Naive thymus-derived CD4-positive, alpha-beta T cell (primary cell): ENCODE measurements at regions of chr20 and their contacts with region 1.

Region 1: GRCh38 chr20:63381807-63382322 is 20.7 kb upstream of the CHRNA4 start:
- DNase-seq: peak in 7 of 9 donors; percentile 30 to 55 (median 39)
- ATAC-seq: peak; percentile 54
- H3K4me3 ChIP-seq: no peak overlapping the region
- H3K4me3 Mint-ChIP-seq: no peak overlapping the region
- H3K27ac ChIP-seq: no peak overlapping the region
- H3K27ac Mint-ChIP-seq: no peak overlapping the region
- H3K4me1 ChIP-seq: no peaks in the 10 kb centered on the region
- H3K4me1 Mint-ChIP-seq: peaks cover 0 to 3% (median 0%) of the 10 kb centered on the region in 7 donors
- H3K27me3 ChIP-seq: no peaks in the 10 kb centered on the region
- H3K27me3 Mint-ChIP-seq: peaks cover 4 to 32% (median 15%) of the 10 kb centered on the region in 5 donors

Region 2: DNA sequence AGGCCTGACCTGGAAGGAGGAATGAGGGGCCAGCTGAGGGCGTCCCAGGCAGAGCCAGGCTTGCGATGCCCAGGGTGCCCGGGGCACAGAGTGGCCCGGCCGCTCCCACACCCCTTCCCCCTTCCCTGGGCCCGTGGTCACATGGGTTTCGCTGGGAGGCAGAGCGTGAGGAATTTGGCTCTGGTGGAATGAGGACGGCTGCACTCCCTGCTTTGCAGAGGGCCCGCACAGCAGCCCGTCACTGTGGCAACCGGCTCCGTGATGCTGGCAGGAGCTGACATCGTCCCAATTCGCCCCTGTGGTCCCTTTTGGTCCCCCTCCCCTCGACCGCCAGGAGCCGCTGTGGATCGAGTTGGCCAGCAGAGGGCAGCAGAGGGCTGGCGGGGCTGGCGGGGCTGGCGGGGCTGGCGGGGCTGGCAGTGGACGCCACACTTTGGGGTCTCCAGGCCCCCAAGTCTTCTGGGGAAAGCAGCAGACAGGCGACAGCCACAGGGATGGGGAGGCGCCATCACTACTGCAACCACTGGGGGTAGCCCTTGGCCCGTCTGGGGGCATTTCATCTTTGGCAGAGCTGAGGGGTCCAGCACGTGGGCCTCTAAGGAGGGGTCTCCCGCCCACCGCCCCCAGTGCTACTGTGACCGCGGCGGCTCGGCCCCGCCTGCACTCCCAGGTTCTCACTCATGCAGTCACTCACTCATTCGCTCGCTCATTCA is 325.5 kb before region 1 on chr20:
- CTCF ChIA-PET with region 1: no interaction called
- POLR2A ChIA-PET with region 1: no interaction called
- intact Hi-C with region 1: loop called in 1 of 2 experiments (anchors 5 kb)
- DNase-seq: peak in 8 of 9 donors; percentile 16 to 64 (median 37)
- ATAC-seq: peak; percentile 78
- H3K4me3 ChIP-seq: no peak overlapping the region
- H3K4me3 Mint-ChIP-seq: no peak overlapping the region
- H3K27ac ChIP-seq: no peak overlapping the region
- H3K27ac Mint-ChIP-seq: no peak overlapping the region
- H3K4me1 ChIP-seq: no peaks in the 10 kb centered on the region
- H3K4me1 Mint-ChIP-seq: peaks cover 0 to 3% (median 0%) of the 10 kb centered on the region in 7 donors
- H3K27me3 ChIP-seq: peaks cover 0 to 3% of the 10 kb centered on the region in 2 donors
- H3K27me3 Mint-ChIP-seq: peaks cover 0 to 18% (median 11%) of the 10 kb centered on the region in 5 donors

Region 3: GRCh38 chr20:63178889-63179686 is 202.8 kb before region 1 on chr20:
- CTCF ChIA-PET with region 1: no interaction called
- POLR2A ChIA-PET with region 1: no interaction called
- intact Hi-C with region 1: loop called in 1 of 2 experiments (anchors 2 kb)
- DNase-seq: peak; percentile 48 to 71 (median 67)
- ATAC-seq: peak; percentile 80
- H3K4me3 ChIP-seq: peak overlapping the region; percentile 33
- H3K4me3 Mint-ChIP-seq: peak overlapping the region in 8 of 10 donors; percentile 23 to 78 (median 66)
- H3K27ac ChIP-seq: no peak overlapping the region
- H3K27ac Mint-ChIP-seq: peak overlapping the region in 2 of 9 donors; percentile 14 to 76
- H3K4me1 ChIP-seq: peaks cover 0 to 6% of the 10 kb centered on the region in 2 donors
- H3K4me1 Mint-ChIP-seq: peaks cover 0 to 17% (median 8%) of the 10 kb centered on the region in 7 donors
- H3K27me3 ChIP-seq: peaks cover 3 to 16% of the 10 kb centered on the region in 2 donors
- H3K27me3 Mint-ChIP-seq: peaks cover 10 to 50% (median 33%) of the 10 kb centered on the region in 5 donors

Region 4: DNA sequence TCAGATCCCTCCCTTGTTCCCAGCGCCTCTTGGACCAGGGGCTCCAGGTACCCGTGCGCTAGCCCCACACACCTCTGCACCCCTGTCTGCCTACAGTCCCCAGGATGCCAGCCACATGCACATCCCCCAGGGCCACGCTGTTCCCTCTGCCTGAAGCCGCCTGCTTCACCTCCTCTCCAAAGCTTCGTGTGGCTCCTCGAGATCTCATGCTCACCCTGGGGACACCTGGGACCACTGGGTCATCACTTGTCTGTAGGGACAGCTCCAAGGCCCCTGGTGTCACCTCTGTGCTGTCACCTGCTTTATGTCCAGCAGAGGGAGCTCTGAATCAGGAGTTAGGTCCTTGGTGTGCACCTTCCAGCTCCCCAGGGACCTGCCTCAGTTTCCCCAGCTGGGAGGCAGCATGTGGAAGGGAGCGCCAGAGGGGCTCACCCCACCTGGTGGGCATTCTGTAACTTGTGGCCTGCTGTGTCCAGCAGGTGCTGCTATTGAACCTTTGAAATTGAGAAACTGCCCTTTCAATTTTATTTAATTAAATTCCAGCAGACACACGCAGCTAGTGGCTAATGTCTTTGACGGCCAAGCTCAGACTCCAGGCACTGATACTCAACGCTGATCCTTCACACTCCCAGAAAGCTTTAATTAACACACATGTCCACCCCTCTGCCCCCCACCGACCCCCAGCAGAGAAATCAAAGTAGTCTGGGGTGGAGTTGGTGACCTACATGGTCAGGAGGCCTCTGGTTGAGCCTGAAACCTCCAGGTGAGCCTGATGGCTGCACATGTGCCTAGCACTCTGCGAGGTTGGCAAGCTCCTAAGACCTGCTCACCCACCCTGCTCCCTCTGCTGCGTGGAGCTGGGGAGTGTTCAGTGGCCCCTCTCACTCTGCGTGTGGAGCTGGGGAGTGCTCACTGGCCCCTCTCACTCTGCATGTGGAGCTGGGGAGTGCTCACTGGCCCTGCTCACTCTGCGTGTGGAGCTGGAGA is 158.4 kb before region 1 on chr20:
- CTCF ChIA-PET with region 1: interaction called, 21 read pairs
- POLR2A ChIA-PET with region 1: no interaction called
- intact Hi-C with region 1: loop called in 1 of 2 experiments (anchors 1 kb)
- DNase-seq: peak in 8 of 9 donors; percentile 22 to 60 (median 36)
- ATAC-seq: peak; percentile 66
- H3K4me3 ChIP-seq: no peak overlapping the region
- H3K4me3 Mint-ChIP-seq: no peak overlapping the region
- H3K27ac ChIP-seq: no peak overlapping the region
- H3K27ac Mint-ChIP-seq: no peak overlapping the region
- H3K4me1 ChIP-seq: no peaks in the 10 kb centered on the region
- H3K4me1 Mint-ChIP-seq: peaks cover 0 to 6% (median 0%) of the 10 kb centered on the region in 7 donors
- H3K27me3 ChIP-seq: no peaks in the 10 kb centered on the region
- H3K27me3 Mint-ChIP-seq: peaks cover 0 to 12% (median 0%) of the 10 kb centered on the region in 5 donors